ENCODE measurements at regions of chr13 and their contacts with region 1.

Region 1: DNA sequence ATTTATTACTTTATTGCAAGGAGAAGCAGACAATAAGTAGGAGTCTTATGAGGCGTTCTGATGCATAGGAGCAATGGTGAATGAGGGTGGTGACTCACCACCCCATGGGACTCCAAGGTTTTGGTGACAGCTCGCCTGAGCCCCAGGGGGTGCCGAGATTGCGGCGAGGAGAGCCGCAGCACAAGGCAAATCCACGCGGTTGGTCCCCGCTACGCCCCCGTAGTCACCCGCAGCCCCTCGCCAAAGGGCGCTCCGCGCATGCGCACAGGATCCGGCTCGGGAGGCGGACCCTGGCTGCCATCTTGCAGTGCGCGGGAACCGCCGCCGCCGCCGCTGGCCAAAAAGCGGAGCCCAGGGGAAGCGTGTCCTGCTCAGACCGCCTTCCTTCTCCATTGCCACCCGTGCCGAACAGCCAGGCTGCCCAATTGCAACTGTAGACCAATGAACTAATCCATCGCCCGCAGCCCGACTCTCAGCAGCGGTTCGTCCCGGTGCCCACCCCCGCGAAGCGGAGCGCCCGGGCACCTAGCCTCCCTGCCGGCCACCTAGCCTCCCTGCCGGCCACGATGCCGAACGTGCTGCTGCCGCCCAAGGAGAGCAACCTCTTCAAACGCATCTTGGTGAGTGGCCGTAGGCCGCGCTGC is at the start of gene NAA16:
- DNase-seq: peak; percentile 97
- ATAC-seq: peak; percentile 85
- H3K4me3 Mint-ChIP-seq: peak within 1 kb of the TSS; percentile 90
- H3K27ac Mint-ChIP-seq: peak within 1 kb of the TSS; percentile 96
- H3K4me1 Mint-ChIP-seq: peaks cover 39% of the 10 kb centered on the region
- H3K27me3 Mint-ChIP-seq: no peaks in the 10 kb centered on the region
- total RNA-seq, gene NAA16: 24.0 to 29.8 TPM

Region 2: GRCh38 chr13:41019011-41019487 is 292.0 kb before region 1 on chr13 and contains the start of gene ELF1:
- CTCF ChIA-PET with region 1: no interaction called
- POLR2A ChIA-PET with region 1: no interaction called
- intact Hi-C with region 1: loop called in 1 of 2 experiments (anchors 5 kb)
- DNase-seq: peak; percentile 67
- ATAC-seq: peak; percentile 87
- H3K4me3 Mint-ChIP-seq: peak within 1 kb of the TSS; percentile 88
- H3K27ac Mint-ChIP-seq: peak within 1 kb of the TSS; percentile 96
- H3K4me1 Mint-ChIP-seq: peaks cover 31% of the 10 kb centered on the region
- H3K27me3 Mint-ChIP-seq: no peaks in the 10 kb centered on the region
- total RNA-seq, gene ELF1: 75.2 to 87.0 TPM

Region 3: DNA sequence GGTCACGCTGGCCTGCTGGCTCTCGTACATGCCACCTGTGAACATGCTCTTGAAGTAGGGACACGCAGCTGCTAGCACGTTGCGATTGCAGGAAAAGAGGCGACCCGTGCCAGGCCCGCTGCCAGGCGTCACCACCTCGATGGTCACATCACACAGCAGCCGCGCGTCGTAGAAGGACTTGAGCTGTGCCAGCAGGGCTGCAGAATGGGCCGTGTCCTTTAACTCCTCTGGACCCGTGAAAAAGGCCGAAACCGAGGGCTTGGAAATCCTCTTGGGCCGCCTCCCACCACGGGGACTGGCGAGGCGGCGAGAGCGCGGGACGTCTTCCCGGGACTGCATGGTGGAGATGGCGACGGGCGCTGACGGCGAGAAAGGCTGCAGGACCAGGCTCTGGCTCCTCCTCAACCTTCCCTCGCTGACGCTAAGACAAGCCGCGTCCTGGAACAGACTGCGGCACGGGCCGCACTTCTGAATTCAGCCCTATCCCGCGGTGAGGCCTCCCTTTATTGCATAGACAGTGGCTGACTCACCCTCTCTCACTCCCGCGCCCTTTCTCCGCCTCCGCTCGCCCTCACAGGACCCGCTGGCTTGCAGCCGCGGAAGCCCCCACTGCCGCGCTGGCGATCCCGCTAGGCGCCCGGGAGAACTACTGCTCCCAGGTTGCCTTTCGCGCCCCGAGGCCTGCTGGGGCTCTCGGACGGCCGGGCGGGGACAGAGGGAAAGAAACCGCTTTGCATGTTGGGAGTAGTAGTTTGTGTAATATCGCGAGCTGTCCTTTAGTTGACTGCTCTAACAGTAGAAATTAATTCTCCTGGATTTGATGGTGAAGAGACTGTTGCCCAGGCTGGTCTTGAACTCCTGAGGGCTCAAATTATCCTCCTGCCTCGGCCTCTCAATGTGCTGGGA is 116.9 kb before region 1 on chr13 and contains the start of gene KBTBD7:
- CTCF ChIA-PET with region 1: no interaction called
- POLR2A ChIA-PET with region 1: no interaction called
- intact Hi-C with region 1: loop called in 1 of 2 experiments (anchors 1 kb)
- DNase-seq: peak; percentile 98
- ATAC-seq: peak; percentile 96
- H3K4me3 Mint-ChIP-seq: peak within 1 kb of the TSS; percentile 83
- H3K27ac Mint-ChIP-seq: peak within 1 kb of the TSS; percentile 98
- H3K4me1 Mint-ChIP-seq: peaks cover 50% of the 10 kb centered on the region
- H3K27me3 Mint-ChIP-seq: no peaks in the 10 kb centered on the region
- total RNA-seq, gene KBTBD7: 3.7 to 4.5 TPM

Region 4: DNA sequence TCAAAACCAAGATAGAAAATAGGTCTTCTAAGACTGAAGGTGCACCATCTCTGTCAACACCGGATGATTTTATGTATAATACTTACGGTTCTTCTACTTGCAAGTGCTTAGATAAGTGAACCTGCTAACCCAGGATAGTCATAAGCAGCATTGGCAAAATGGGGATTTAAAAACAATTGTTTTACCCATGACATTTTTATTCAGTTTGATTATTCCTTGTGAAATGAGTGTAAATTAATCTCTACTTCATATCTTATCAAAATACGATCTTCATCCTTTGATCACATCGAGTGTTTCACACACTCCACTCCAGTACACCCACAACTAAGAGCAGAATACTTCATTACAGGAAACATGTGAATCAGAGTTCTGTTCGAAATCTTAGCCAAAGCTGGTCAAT is 24.7 kb before region 1 on chr13:
- CTCF ChIA-PET with region 1: no interaction called
- POLR2A ChIA-PET with region 1: interaction called, 4 read pairs
- intact Hi-C with region 1: loop called in 1 of 2 experiments (anchors 1 kb)
- DNase-seq: no peak
- ATAC-seq: peak; percentile 87
- H3K4me3 Mint-ChIP-seq: peak overlapping the region; percentile 40
- H3K27ac Mint-ChIP-seq: peak overlapping the region; percentile 68
- H3K4me1 Mint-ChIP-seq: peaks cover 24% of the 10 kb centered on the region
- H3K27me3 Mint-ChIP-seq: no peaks in the 10 kb centered on the region

Region 5: GRCh38 chr13:41456768-41457588 is 145.9 kb after region 1 on chr13 and contains the start of gene RGCC:
- CTCF ChIA-PET with region 1: no interaction called
- POLR2A ChIA-PET with region 1: no interaction called
- intact Hi-C with region 1: loop called in 1 of 2 experiments (anchors 2 kb)
- DNase-seq: peak; percentile 96
- ATAC-seq: peak; percentile 74
- H3K4me3 Mint-ChIP-seq: peak within 1 kb of the TSS; percentile 82
- H3K27ac Mint-ChIP-seq: peak within 1 kb of the TSS; percentile 97
- H3K4me1 Mint-ChIP-seq: peaks cover 36% of the 10 kb centered on the region
- H3K27me3 Mint-ChIP-seq: no peaks in the 10 kb centered on the region
- total RNA-seq, gene RGCC: 134 to 146 TPM

Region 6: DNA sequence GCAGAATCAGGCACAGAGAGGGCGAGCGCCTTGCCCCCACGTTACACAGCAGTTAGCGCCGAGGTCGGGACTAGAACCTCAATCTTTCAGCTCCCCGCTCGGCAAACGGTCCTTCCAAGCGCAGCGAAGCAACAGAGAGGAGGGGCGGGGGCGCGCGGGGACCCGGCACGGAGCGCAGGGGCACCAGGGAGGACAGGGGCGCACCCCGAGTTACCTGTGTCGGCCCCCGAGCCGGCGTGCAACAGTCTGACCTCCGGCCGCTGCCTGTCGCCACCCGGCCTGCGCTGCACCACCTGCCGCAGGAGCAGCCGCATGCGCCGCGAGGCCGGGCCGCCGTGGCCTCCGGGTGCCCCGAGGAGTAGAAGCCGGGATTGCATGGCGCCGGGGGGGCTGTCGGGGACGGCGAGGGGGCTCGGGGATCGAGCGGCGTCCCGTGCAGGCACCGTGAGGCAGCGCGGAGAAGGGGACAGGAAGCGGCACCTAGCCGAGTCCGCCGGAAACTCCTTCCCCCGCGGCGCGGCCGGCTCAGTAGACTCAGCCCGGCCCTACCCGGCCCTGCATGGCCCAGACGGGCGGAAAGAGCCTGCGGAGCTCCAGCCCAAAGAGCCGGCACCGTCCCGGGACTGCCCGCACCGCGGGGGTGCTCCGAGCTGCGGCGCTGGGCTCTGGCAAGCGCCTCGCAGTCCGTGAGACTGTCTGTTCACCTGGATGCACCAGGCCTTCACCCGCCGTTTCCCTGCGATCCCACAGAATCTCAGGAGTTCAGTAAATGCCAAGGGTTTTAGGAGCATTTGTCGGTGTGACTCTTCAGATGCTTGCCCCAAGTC is 649.8 kb after region 1 on chr13 and contains the start of gene VWA8:
- CTCF ChIA-PET with region 1: no interaction called
- POLR2A ChIA-PET with region 1: no interaction called
- intact Hi-C with region 1: loop called in 1 of 2 experiments (anchors 5 kb)
- DNase-seq: peak; percentile 93
- ATAC-seq: peak; percentile 81
- H3K4me3 Mint-ChIP-seq: peak within 1 kb of the TSS; percentile 92
- H3K27ac Mint-ChIP-seq: peak within 1 kb of the TSS; percentile 99
- H3K4me1 Mint-ChIP-seq: peaks cover 60% of the 10 kb centered on the region
- H3K27me3 Mint-ChIP-seq: peaks cover 2% of the 10 kb centered on the region
- total RNA-seq, gene VWA8: 21.7 to 26.2 TPM

Region 7: DNA sequence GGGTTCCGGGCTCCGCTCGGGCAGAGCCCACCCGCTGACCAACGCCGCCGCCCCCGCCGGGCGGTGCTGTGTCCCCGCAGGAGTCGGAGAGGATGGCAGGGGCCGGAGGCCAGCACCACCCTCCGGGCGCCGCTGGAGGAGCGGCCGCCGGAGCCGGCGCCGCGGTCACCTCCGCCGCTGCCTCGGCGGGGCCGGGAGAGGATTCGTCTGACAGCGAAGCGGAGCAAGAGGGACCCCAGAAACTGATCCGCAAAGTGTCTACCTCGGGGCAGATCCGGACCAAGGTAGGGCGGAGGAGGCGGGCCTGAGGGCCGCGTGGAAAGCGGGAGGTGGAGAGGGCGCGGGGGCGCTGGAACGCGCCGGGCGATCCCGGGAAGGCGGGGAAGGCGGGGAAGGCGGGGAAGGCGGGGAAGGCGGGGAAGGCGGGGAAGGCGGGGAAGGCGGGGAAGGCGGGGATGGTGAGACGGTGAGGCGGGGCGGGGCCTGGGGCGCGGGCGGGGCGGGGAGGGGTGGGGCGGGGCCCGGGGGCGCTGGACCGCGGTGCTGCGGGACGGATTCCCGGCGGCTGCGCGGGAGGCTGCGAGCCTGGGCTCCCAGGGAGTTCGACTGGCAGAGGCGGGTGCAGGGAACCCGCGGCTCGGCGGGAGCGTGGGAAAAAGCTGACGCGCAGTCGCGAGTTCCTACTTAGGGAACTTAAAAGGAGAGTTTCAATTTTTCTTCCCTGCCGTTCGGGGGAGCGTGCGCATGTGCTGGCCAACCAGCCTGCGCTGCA is 737.8 kb after region 1 on chr13:
- CTCF ChIA-PET with region 1: no interaction called
- POLR2A ChIA-PET with region 1: no interaction called
- intact Hi-C with region 1: loop called in 1 of 2 experiments (anchors 2 kb)
- DNase-seq: peak; percentile 82
- ATAC-seq: peak; percentile 68
- H3K4me3 Mint-ChIP-seq: peak overlapping the region; percentile 86
- H3K27ac Mint-ChIP-seq: no peak overlapping the region
- H3K4me1 Mint-ChIP-seq: peaks cover 24% of the 10 kb centered on the region
- H3K27me3 Mint-ChIP-seq: no peaks in the 10 kb centered on the region

Measured in activated CD4-positive, alpha-beta T cell treated with anti-CD3 and anti-CD28 coated beads for 36 hours (primary cell).